ENCODE measurements at regions of chr20 and their contacts with region 1.

Region 1: DNA sequence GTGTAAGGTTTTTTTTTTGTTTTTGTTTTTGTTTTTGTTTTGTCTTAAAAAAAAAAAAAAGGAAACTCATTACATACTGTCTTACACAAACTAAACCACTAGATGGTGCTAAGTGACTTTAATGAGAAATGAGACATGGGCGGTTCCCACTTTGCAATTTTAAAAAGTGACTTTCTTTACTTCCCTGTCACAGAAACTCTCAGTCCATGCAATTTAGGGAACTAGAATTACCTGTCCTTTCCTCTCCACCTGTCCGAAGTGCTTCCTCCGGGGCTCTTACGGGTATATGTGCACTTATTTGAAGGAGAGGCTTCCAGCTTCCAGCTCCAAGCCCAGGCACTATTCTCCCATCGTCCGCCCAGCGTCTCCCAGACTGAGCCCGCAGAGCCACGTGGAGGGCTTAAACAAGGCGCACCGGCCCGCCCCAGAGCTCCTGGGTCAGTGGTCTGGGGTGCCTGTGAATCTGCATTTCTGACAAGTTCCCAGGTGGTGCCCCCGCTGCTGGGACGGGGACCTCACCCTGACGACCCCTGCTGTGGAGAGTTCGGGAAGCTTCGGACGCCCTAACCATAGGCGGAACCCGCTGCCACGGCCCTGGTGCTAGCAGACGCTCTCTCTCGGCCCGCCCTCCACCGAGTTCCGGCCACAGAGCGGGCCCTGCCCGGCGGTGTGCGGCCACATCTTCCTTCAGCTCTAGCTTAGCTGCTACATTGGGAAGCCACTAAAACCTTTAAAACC is 26.1 kb downstream of the BFSP1 start:
- DNase-seq: peak; percentile 90
- H3K4me3 Mint-ChIP-seq: peak overlapping the region; percentile 88
- H3K27ac Mint-ChIP-seq: peak overlapping the region; percentile 92
- H3K4me1 Mint-ChIP-seq: peaks cover 47% of the 10 kb centered on the region
- H3K27me3 Mint-ChIP-seq: peaks cover 4% of the 10 kb centered on the region

Region 2: DNA sequence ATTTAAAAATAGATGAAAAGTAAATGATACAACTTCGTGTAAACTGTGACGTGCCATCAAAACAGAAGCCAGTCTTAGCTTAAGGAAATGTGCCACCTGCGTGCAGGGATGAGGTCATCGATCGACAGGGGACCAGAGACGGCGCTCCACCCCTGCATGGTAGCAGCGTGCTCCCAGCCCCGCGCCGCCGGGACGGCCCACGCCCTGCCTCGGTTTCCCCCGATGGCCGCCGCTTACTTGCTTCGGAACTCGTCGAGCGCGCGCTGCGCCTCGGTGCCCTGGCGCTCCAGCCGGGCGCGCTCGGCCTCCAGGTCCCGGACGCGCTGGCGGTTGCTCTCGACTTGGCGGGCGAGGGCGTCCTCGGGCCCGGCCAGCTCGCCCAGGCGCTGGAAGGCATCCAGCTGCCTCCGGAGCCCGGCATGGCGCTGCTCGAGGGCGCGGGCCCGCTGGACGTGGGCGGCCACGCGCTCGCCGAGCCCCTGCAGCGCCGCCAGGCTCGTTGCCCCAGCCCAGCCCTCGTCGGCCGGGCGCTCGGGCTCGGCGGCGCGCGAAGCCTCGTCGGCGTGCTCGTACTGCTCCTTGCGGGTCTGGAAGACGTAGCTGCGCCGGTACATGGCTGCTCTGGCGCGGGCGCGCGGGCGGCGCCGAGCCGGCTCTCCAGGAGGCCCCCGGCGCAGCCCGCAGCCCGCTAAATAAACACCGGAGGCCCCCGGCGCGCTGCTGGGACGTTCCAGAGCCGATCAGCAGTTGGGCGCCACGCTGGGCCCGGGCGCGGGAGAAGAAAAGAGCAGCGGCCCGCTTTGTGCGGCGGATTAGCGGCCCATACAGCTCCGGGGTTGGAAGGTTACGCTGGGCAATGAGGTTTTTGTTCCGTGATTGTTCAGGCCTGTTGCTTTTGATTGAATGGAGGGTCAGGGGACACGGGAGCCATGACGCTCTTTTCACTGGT is 25.9 kb after region 1 on chr20 and contains the start of gene BFSP1:
- intact Hi-C with region 1: loop called (anchors 1 kb)
- DNase-seq: peak; percentile 86
- H3K4me3 Mint-ChIP-seq: peak within 1 kb of the TSS; percentile 91
- H3K27ac Mint-ChIP-seq: peak within 1 kb of the TSS; percentile 94
- H3K4me1 Mint-ChIP-seq: peaks cover 19% of the 10 kb centered on the region
- H3K27me3 Mint-ChIP-seq: peaks cover 9% of the 10 kb centered on the region
- total RNA-seq, gene BFSP1: 0.33 and 0.43 TPM in 2 replicates

Region 3: DNA sequence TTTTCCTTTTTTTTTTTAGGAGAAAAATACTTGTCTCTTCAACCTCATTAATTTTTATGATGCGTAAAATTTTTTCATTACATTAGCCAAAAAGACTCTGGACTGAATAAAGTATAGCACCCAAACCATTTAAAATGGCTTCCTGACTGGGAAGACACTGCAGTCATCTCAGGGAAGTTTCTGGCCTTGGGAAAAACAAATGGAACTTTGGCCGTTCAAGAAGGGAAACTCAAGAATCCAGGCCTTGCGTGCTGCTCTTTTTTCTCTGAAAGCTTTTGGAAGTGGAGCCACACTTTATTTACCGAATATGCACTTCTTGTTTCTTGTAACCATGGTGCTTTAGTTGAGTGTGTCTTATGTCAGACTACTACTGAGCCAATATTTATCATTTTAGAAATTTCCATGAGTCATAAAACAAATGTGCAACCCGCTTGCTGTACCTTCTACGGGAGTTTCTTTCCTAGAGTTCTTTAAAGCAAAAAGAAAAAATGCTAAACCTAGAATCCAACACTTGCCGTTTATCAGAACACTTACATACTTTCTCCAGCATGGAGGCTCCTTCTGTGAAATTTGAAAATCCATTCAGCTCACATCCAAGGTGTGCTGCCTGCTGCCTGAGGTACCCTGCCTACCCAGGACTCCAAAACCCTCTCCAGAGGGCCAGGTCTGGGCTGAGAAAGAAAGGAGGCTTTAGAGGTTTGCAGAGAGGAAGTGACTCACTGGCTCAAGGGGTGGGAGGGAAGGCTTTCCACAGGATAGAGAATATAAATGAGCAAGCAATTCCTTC is 53.3 kb after region 1 on chr20:
- intact Hi-C with region 1: loop called (anchors 2 kb)
- DNase-seq: peak; percentile 71
- H3K4me3 Mint-ChIP-seq: peak overlapping the region; percentile 74
- H3K27ac Mint-ChIP-seq: peak overlapping the region; percentile 97
- H3K4me1 Mint-ChIP-seq: peaks cover 36% of the 10 kb centered on the region
- H3K27me3 Mint-ChIP-seq: no peaks in the 10 kb centered on the region

Region 4: DNA sequence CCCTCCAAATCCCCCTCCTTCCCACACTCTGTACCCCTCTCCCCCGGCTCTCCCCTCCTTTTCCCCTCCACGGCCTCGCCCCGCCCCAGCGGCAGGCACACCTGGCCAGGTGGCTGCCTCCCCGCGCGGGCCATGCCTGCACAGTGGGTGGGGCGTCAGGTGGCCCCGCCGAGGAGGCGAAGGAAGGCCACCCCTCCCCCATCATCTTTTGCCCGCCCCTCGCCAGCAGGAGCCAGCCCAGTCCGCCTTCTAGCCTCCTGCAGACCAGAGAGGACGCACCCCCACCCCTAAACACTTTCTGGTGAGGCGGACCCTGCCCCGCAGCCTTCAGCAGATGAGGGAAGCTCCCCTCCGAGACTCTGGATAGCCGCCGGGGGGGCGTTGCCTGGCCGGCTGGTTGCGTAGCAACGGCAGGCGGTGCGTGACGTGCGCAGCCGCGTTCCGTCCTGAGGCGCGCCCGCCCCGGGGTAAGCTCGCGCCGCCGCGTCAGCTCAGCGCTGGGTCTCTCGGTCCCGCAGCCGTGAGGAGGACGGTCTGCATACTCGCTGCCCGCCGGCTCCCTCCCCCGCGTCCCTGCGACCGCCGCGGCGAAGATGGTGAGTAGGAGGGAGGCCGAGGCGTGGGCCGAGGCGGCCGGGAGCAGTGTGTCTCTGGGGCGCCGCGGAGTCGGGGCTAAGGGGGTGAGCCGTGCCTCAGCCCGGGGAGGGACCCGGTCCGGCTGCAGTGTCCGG is 64.7 kb after region 1 on chr20 and contains the start of gene DSTN:
- intact Hi-C with region 1: loop called (anchors 2 kb)
- DNase-seq: peak; percentile 97
- H3K4me3 Mint-ChIP-seq: peak within 1 kb of the TSS; percentile 94
- H3K27ac Mint-ChIP-seq: peak within 1 kb of the TSS; percentile 95
- H3K4me1 Mint-ChIP-seq: peaks cover 23% of the 10 kb centered on the region
- H3K27me3 Mint-ChIP-seq: peaks cover 9% of the 10 kb centered on the region
- total RNA-seq, gene DSTN: 58.6 and 65.6 TPM in 2 replicates

Region 5: GRCh38 chr20:17617551-17618223 is 112.6 kb after region 1 on chr20:
- intact Hi-C with region 1: loop called (anchors 1 kb)
- DNase-seq: peak; percentile 82
- H3K4me3 Mint-ChIP-seq: no peak overlapping the region
- H3K27ac Mint-ChIP-seq: no peak overlapping the region
- H3K4me1 Mint-ChIP-seq: no peaks in the 10 kb centered on the region
- H3K27me3 Mint-ChIP-seq: no peaks in the 10 kb centered on the region

Region 6: DNA sequence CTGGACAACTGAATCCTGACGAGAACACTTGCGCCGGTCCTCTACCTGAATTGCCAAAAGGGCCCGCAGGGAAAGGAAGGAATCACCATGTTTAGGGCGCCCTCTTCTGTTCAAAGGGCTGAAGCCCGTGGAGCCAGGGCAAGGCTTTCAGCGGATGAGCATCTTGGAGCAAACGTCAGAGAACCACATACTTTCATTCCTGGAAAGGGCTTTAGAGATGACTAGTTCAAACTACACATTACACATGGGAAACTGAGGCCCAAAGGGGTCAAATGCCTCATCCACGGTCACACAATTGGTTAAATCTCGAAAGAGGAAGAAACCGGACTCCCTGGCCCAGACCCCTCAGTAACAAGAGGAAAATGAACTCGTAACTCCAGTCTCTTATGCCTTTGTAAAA is 771.8 kb after region 1 on chr20:
- intact Hi-C with region 1: loop called (anchors 5 kb)
- DNase-seq: peak; percentile 91
- H3K4me3 Mint-ChIP-seq: peak overlapping the region; percentile 8
- H3K27ac Mint-ChIP-seq: no peak overlapping the region
- H3K4me1 Mint-ChIP-seq: no peaks in the 10 kb centered on the region
- H3K27me3 Mint-ChIP-seq: peaks cover 32% of the 10 kb centered on the region

Measured in activated CD4-positive, alpha-beta T cell treated with anti-CD3 and anti-CD28 coated beads, Interleukin-2, amount 10 ng/mL, durations not matched to agents 24 days and 14 days (primary cell).